A549 (cell line): ENCODE measurements at regions of chr10 and their contacts with region 1.

Region 1: DNA sequence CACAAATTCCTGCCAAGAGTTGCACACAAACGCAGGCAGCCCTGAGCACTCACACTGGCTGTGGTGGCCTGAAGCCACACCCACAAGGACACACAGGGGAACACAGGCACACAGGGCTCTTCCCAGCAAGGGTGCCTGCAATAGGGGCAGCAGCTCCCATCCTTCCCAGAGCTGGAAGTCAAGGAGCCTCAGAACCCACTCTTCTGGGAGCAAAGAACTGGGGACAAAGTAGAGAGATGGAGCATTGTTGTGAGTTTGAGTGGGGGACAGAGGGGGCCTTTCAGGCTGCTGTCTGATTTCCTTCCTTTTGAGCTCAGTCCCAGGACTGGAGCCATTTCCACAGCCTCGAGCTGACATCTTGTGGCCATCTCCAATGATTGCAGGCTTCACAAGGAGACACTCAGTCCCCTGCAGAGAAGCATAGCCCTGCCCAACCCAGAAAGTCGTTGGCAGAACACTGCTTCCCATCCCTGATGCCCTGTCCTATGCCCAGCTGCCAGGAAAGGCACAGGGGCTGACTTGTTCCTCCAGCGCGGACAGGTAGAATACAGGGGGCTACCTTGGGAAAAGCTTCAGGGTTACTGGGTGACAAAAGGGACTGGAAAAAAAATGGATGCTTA is 34.4 kb upstream of the SLF2 start:
- DNase-seq: peak; percentile 80 to 92
- ATAC-seq: peak; percentile 90 to 97
- H3K4me3 ChIP-seq: no peak overlapping the region
- H3K27ac ChIP-seq: peak overlapping the region in 1 of 2 experiments; percentile 64; a peak in 2 of 6 replicates
- H3K4me1 ChIP-seq: peaks cover 15% of the 10 kb centered on the region; the same call in 2 of the 3 replicates
- CTCF ChIP-seq: peak; percentile 91
- EP300 ChIP-seq: no peak
- POLR2A ChIP-seq: no peak
- RAD21 ChIP-seq: peak; percentile 91 to 94

Region 2: DNA sequence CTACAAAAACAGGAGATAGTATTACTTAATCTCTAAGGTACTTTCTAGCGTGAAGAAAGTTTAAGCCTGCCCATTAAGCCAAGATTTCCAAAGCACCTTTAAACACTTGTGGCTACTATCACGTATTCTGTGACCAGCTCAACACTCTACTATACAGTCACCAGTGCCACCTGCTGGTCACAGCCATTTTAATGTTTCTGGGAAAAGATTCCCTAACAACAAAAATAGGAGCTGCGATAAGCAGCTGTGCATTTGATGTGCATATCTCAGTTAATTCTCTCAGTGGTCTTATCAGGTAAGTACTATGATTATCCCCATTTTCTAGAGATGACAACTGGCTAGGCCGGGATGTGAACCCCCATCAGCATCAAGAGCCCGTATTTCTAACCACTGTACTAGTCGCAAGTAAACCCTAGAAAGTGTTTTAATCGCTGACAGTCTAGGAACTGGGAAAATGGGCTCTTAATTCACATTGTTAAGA is 359.6 kb before region 1 on chr10:
- CTCF ChIA-PET with region 1: interaction called, 12 read pairs
- POLR2A ChIA-PET with region 1: no interaction called
- DNase-seq: peak; percentile 57 to 58
- ATAC-seq: peak; percentile 76 to 85
- H3K4me3 ChIP-seq: no peak overlapping the region
- H3K27ac ChIP-seq: no peak overlapping the region
- H3K4me1 ChIP-seq: no peaks in the 10 kb centered on the region
- CTCF ChIP-seq: peak; percentile 84
- EP300 ChIP-seq: no peak
- POLR2A ChIP-seq: no peak
- RAD21 ChIP-seq: peak; percentile 65 to 69

Region 3: DNA sequence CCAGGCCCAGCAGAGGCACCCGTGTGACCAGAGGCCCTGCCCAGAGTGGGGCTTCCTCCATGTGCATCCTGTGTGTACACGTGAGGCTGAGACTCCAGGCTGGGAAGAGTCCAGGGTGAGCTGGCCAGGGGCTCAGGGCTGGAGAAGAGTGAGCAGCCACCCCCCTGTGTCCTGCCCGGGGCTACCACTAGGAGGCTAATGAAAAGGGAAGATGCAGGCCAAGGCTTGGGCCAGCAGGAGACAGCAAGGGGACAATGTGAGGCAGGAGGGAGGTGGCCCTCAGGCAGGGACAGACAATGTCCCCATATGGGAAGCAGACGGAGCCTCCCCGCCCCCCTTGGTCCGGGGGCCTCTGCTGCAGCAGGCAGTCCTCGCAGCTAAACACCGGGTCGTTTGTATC is 240.6 kb before region 1 on chr10:
- CTCF ChIA-PET with region 1: interaction called, 11 read pairs
- POLR2A ChIA-PET with region 1: no interaction called
- DNase-seq: peak; percentile 62 to 67
- ATAC-seq: peak; percentile 85 to 98
- H3K4me3 ChIP-seq: no peak overlapping the region
- H3K27ac ChIP-seq: no peak overlapping the region
- H3K4me1 ChIP-seq: no peaks in the 10 kb centered on the region
- CTCF ChIP-seq: peak; percentile 41
- EP300 ChIP-seq: no peak
- POLR2A ChIP-seq: no peak
- RAD21 ChIP-seq: peak in 1 of 2 experiments; percentile 41; a peak in 2 of 5 replicates

Region 4: GRCh38 chr10:100710151-100710871 is 168.1 kb before region 1 on chr10:
- CTCF ChIA-PET with region 1: interaction called, 12 read pairs
- POLR2A ChIA-PET with region 1: no interaction called
- DNase-seq: peak in 1 of 2 experiments; percentile 41
- ATAC-seq: peak; percentile 65 to 80; a peak in 4 of 6 replicates
- H3K4me3 ChIP-seq: peak overlapping the region; percentile 47
- H3K27ac ChIP-seq: peak overlapping the region; percentile 39 to 79; a peak in 5 of 6 replicates
- H3K4me1 ChIP-seq: 0 out of 3 replicates have a peak, but pooled peaks cover 4% of the 10 kb centered on the region
- CTCF ChIP-seq: no peak
- EP300 ChIP-seq: no peak
- POLR2A ChIP-seq: no peak
- RAD21 ChIP-seq: no peak

Region 5: DNA sequence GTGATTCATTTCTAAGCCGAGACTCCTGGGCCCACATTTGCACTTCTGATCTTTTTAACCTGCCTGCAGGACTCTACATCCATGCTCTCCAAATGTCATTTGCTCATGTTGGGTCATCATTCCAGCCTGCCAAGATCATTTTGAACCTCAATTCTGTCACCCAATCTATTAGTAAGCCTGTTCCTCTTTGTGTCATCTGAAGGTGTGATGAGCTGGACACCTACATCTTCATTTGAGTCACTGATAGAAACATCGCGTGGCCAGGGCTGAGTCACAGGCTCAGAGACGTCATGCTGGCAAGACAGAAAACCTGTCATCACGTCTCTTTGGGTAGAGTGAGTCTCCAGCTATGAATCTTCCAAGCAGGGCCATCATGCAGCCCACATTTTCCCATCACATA is 31.0 kb before region 1 on chr10:
- CTCF ChIA-PET with region 1: interaction called, 13 read pairs
- POLR2A ChIA-PET with region 1: no interaction called
- DNase-seq: peak; percentile 45 to 58
- ATAC-seq: peak; percentile 59 to 80; a peak in 5 of 6 replicates
- H3K4me3 ChIP-seq: no peak overlapping the region
- H3K27ac ChIP-seq: no peak overlapping the region
- H3K4me1 ChIP-seq: peaks cover 7% of the 10 kb centered on the region; the same call in 1 of the 3 replicates
- CTCF ChIP-seq: no peak
- EP300 ChIP-seq: no peak
- POLR2A ChIP-seq: no peak
- RAD21 ChIP-seq: no peak

Region 6: DNA sequence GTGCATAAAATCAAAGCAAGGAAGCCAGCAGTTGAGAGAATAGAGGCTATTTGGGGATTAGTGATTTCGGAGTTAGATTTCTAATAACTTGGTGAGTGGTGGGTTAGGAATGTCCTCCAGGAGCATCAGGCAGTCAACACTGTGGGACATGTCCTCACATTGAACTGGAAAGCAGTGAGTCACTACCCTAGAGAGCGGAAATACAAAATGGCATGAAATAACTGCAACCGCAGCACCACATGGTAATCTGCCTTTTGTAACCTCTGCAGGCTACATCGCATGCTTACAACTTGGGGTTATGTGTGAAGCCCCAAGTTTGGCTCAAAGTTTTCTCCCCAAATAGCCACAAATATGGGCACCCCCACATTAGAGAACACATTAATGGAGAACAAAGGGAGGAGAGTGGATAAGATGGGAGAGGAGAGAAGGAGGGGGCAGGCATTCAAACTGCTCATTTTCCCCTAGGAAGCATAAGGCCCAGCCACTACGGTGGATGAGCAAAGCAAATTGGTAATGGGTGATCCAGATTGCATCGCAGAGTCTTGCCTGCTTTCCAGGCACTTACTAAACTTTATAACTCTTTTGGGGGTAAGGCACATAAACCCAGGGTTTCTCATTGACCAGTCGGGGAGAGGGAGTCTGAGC is 12.4 kb after region 1 on chr10:
- CTCF ChIA-PET with region 1: interaction called, 48 read pairs
- POLR2A ChIA-PET with region 1: no interaction called
- DNase-seq: peak; percentile 74 to 75
- ATAC-seq: peak; percentile 88 to 93
- H3K4me3 ChIP-seq: no peak overlapping the region
- H3K27ac ChIP-seq: peak overlapping the region; percentile 70 to 85
- H3K4me1 ChIP-seq: peaks cover 24% of the 10 kb centered on the region
- CTCF ChIP-seq: no peak
- EP300 ChIP-seq: peak in 1 of 2 experiments; percentile 16; a peak in 1 of 5 replicates
- POLR2A ChIP-seq: no peak
- RAD21 ChIP-seq: no peak

Region 7: GRCh38 chr10:100923580-100923979 is 45.2 kb after region 1 on chr10:
- CTCF ChIA-PET with region 1: no interaction called
- POLR2A ChIA-PET with region 1: no interaction called
- DNase-seq: no peak
- ATAC-seq: no peak
- H3K4me3 ChIP-seq: no peak overlapping the region
- H3K27ac ChIP-seq: no peak overlapping the region
- H3K4me1 ChIP-seq: peaks cover 7% of the 10 kb centered on the region; the same call in 2 of the 3 replicates
- CTCF ChIP-seq: no peak
- EP300 ChIP-seq: no peak
- POLR2A ChIP-seq: no peak
- RAD21 ChIP-seq: no peak

Region 8: GRCh38 chr10:100998991-100999741 is 120.8 kb after region 1 on chr10:
- CTCF ChIA-PET with region 1: no interaction called
- POLR2A ChIA-PET with region 1: no interaction called
- DNase-seq: peak; percentile 74 to 84
- ATAC-seq: peak; percentile 40 to 64
- H3K4me3 ChIP-seq: peak overlapping the region; percentile 92
- H3K27ac ChIP-seq: peak overlapping the region; percentile 98
- H3K4me1 ChIP-seq: peaks cover 27% of the 10 kb centered on the region
- CTCF ChIP-seq: peak; percentile 83
- EP300 ChIP-seq: no peak
- POLR2A ChIP-seq: peak; percentile 61
- RAD21 ChIP-seq: peak; percentile 21 to 57; a peak in 4 of 5 replicates

Region 9: DNA sequence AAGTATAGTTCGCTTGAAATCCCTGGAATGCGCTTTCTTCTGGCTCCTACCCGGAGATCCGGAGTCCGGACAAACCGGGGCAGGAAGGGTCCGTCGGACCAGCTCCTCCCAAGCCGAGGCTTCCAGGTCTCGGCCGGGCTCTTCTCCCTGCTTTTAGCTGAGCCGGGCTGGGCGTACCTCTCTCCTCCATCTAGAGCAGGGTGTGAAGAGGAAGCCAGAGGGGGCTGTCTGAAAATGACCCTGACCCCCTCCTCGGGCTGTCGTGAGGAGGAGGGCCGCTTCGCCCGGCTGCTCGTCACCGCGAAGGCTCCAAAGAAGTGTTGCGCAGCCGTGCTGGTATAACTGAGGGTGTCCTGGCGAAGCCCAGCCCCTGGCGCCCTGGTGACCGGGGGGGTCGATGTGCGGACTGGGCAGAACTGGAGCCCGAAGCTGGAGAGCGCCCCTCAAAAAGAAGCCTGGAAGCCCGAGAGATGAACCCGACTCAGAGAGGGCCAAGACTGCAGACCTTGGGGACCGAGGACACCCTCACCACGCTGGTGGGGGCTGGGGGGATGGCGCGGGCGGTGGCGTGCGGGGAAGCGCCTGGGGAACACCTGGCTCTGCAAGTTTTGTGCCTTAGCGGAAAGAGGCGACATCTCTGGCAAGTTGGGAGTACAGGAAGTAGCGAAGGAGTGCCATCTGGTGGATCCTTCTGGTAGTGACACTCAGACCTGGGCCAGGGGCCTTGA is 189.1 kb after region 1 on chr10:
- CTCF ChIA-PET with region 1: no interaction called
- POLR2A ChIA-PET with region 1: no interaction called
- DNase-seq: peak; percentile 84 to 90
- ATAC-seq: peak; percentile 37 to 67
- H3K4me3 ChIP-seq: peak overlapping the region; percentile 57
- H3K27ac ChIP-seq: peak overlapping the region; percentile 87 to 91
- H3K4me1 ChIP-seq: peaks cover 21% of the 10 kb centered on the region
- CTCF ChIP-seq: peak; percentile 89
- EP300 ChIP-seq: no peak
- POLR2A ChIP-seq: peak; percentile 21; the same call in 1 of the 2 replicates
- RAD21 ChIP-seq: peak; percentile 78 to 82

Region 10: DNA sequence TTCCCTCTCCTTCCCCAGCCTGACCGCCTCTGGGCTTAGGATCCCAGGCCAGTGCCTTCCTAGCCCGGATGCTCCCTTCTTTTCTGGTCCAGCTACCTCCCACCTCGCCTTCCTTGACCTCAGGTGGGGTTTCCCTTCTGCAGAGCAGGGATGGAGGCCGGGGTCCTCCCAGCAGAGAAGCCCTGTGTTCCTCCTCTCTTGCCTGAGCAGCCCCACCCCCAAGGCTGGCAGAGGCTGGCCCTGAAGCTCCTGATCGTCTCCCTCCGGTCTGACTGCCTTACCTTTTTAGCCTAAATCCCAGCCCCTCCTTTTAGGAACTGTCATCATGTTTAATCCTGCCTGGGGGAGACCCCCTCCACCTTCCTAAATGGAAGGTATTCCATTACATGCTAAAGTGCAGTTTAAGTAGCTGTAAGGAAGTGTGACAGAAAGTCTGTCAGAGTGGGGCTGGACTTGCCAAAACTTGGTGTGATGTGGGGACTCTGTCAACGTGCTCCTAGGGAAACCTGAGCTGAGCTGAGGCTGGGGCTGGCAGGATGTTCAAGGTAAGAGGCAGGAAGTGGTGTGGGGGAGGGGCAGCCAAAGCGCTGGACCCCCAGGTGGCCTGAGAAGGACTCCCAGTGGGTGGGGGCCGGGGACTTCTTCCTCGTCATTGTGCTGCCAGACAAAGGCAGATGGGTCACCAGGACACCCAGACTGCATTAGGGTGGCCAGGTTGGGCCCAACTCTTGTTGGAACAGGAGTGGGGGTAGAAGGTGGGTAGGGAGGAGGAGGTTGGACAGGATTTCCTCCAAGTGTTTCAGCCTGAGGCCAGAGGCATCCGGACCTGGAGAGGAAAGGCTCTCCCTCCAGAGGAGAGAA is 311.4 kb after region 1 on chr10:
- CTCF ChIA-PET with region 1: no interaction called
- POLR2A ChIA-PET with region 1: no interaction called
- DNase-seq: no peak
- ATAC-seq: no peak
- H3K4me3 ChIP-seq: no peak overlapping the region
- H3K27ac ChIP-seq: no peak overlapping the region
- H3K4me1 ChIP-seq: no peaks in the 10 kb centered on the region
- CTCF ChIP-seq: no peak
- EP300 ChIP-seq: no peak
- POLR2A ChIP-seq: no peak
- RAD21 ChIP-seq: no peak